ENCODE measurements at regions of chr6 and their contacts with region 1.

Region 1: DNA sequence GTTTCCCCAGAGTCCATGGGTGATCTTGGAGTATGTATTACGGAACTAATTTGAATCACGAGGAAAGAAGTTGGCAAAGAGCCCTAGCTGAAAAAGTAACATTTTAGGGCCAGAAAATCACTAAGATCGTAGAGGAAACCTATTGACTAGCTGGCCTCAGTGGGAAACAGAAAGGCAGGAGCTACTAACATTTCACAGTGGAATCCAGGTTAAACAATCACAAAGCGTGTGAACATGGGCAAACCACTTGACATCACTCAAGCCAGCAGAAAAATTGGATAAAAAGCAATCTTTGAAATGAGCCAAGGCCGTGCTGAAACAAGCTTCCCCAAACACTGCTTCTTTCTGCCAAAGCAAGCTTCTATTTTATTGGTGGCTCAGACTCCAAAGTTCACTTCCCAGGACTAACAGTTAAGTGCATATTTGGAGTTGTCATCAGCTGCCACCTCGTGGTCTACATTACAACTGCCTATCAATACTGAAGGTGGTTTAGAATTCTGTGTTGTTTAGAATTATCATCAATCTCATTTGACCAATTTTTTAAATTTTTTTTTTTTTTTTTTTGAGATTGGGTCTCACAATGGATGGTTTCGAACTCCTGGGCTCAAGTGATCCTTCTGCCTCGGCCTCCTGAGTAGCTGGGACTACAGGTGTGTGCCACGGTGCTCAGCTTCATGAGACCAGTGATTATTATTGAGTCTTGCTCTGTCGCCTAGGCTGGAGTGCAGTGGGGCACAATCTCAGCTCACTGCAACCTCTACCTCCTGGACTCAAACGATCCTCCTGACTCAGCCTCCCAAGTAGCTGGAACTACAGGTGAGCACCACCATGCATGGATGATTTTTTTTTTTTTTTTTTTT is 10.6 kb downstream of the RPS10 start:
- DNase-seq: peak; percentile 76 to 90 (median 78)
- ATAC-seq: peak; percentile 96
- H3K4me3 ChIP-seq: no peak overlapping the region
- H3K27ac ChIP-seq: peak overlapping the region; percentile 55 to 85 (median 70)
- H3K4me1 ChIP-seq: peaks cover 14% of the 10 kb centered on the region
- H3K27me3 ChIP-seq: no peaks in the 10 kb centered on the region
- CTCF ChIP-seq: peak; percentile 31 to 97 (median 94)
- POLR2A ChIP-seq: peak in 1 of 3 donors; percentile 8

Region 2: GRCh38 chr6:34189806-34190503 is 225.3 kb before region 1 on chr6:
- intact Hi-C with region 1: loop called (anchors 5 kb)
- DNase-seq: peak in 1 of 4 donors; percentile 47
- ATAC-seq: no peak
- H3K4me3 ChIP-seq: no peak overlapping the region
- H3K27ac ChIP-seq: no peak overlapping the region
- H3K4me1 ChIP-seq: no peaks in the 10 kb centered on the region
- H3K27me3 ChIP-seq: no peaks in the 10 kb centered on the region
- CTCF ChIP-seq: no peak
- POLR2A ChIP-seq: no peak

Region 3: DNA sequence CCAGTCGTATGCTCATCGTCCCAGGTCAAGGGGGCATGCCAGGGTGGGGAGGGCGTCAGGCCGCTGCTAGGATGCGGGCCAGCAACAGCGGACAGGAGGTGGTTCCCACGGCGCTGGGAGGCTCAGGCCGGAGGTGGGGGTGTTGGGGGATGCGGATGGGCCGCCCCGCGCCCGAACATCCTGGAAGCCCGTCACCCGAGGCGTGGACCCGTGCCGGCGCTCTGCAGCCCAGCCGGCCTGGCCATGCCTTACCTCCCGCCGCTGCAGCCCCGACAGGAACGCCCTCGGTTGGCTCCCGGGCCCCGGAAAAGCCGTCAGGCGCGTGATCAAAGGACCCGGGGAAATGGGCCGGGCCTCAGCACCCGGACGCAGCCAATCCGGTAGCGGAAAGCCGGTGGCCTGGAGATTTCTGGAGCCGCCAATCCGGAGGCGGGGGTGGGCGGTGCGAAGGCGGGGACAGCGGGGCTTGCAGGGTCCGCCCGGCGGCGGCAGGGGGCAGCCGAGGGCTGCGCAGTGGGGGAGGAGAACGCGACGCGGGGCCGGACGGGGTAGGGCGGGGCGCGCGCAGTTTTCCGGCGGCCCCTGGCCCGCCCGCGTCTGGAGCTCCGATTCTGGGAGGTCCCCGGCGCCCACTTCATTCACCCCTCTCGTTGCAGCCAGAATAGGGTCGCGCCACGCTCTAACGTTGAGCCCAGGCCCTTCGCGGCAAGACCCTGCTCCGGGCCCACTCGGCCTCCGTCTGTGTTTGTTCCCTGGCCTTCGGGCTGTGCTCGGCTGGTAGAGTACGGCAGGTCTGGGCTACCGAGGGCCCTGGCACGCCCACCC is 166.3 kb before region 1 on chr6 and contains the start of gene SMIM29:
- intact Hi-C with region 1: loop called (anchors 5 kb)
- DNase-seq: peak; percentile 97 to 98 (median 97)
- ATAC-seq: peak; percentile 96
- H3K4me3 ChIP-seq: peak within 1 kb of the TSS; percentile 47 to 66
- H3K27ac ChIP-seq: peak within 1 kb of the TSS; percentile 75 to 82 (median 80)
- H3K4me1 ChIP-seq: peaks cover 23% of the 10 kb centered on the region
- H3K27me3 ChIP-seq: no peaks in the 10 kb centered on the region
- CTCF ChIP-seq: peak; percentile 89 to 98 (median 98)
- POLR2A ChIP-seq: peak; percentile 49 to 77 (median 73)
- total RNA-seq, gene SMIM29: 8.6 to 21.5 TPM

Region 4: DNA sequence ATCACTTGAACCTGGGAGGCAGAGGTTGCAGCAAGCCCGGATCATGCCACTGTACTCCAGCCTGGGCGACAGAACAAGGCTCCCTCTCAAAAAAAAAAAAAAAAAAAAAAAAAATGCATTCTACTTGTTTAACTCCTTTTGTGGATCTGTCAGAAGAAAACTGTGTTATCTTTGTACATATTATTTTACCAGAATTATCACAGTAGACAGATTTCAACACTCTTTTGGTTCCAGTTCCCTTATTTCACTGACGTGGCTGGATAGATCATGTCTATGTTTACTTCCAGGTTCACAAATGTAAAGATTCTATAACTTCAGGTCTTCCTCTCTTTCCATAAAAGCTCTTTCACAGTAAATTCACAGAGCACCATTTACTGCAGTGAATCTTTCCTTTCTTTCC is 41.2 kb before region 1 on chr6:
- intact Hi-C with region 1: no loop called
- DNase-seq: no peak
- ATAC-seq: no peak
- H3K4me3 ChIP-seq: no peak overlapping the region
- H3K27ac ChIP-seq: peak overlapping the region in 1 of 4 donors; percentile 16
- H3K4me1 ChIP-seq: no peaks in the 10 kb centered on the region
- H3K27me3 ChIP-seq: no peaks in the 10 kb centered on the region
- CTCF ChIP-seq: no peak
- POLR2A ChIP-seq: no peak

Measured in body of pancreas (tissue), 4 donors.